Psoas muscle (tissue), 8 donors: ENCODE measurements at regions of chr1 and their contacts with region 1.

Region 1: GRCh38 chr1:47388891-47389238 is 27.2 kb upstream of the FOXE3 start:
- DNase-seq: peak; percentile 37 to 62
- ATAC-seq: peak; percentile 66 to 77 (median 72)
- H3K4me3 ChIP-seq: no peak overlapping the region
- H3K27ac ChIP-seq: no peak overlapping the region
- H3K4me1 ChIP-seq: no peaks in the 10 kb centered on the region
- H3K27me3 ChIP-seq: peaks cover 0 to 2% (median 0%) of the 10 kb centered on the region in 3 donors
- CTCF ChIP-seq: peak; percentile 62

Region 2: GRCh38 chr1:46991083-46991923 is 397.6 kb before region 1 on chr1:
- intact Hi-C with region 1: no loop called
- DNase-seq: no peak
- ATAC-seq: no peak
- H3K4me3 ChIP-seq: no peak overlapping the region
- H3K27ac ChIP-seq: no peak overlapping the region
- H3K4me1 ChIP-seq: no peaks in the 10 kb centered on the region
- H3K27me3 ChIP-seq: no peaks in the 10 kb centered on the region
- CTCF ChIP-seq: peak; percentile 21

Region 3: DNA sequence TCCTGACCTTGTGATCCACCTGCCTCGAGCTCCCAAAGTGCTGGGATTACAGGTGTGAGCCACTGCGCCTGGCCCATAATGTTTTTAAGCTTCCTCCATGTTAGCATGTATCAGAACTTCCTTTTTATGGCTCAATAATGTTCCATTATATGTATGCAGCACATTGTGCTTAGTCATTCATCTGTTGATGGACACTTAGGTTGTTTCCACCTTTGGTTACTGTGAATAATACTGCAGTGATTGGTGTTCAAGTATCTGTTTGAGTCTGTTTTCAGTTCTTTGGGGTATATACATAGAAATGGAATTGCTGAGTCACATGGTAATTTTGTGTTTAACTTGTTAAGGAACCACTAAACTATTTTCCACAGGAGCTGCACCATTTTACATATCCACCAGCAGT is 37.6 kb before region 1 on chr1:
- intact Hi-C with region 1: no loop called
- DNase-seq: no peak
- ATAC-seq: no peak
- H3K4me3 ChIP-seq: no peak overlapping the region
- H3K27ac ChIP-seq: no peak overlapping the region
- H3K4me1 ChIP-seq: peaks cover 8% of the 10 kb centered on the region
- H3K27me3 ChIP-seq: no peaks in the 10 kb centered on the region
- CTCF ChIP-seq: no peak

Region 4: GRCh38 chr1:47725992-47726855 is 337.4 kb after region 1 on chr1:
- intact Hi-C with region 1: loop called in 1 of 2 experiments (anchors 5 kb)
- DNase-seq: peak; percentile 69 to 82
- ATAC-seq: peak; percentile 82 to 97 (median 90)
- H3K4me3 ChIP-seq: peak overlapping the region; percentile 39
- H3K27ac ChIP-seq: no peak overlapping the region
- H3K4me1 ChIP-seq: peaks cover 5% of the 10 kb centered on the region
- H3K27me3 ChIP-seq: peaks cover 0 to 41% (median 1%) of the 10 kb centered on the region in 3 donors
- CTCF ChIP-seq: peak; percentile 82